Activated naive CD4-positive, alpha-beta T cell treated with anti-CD3 and anti-CD28 coated beads for 36 hours (primary cell): ENCODE measurements at regions of chr15 and their contacts with region 1.

Region 1: GRCh38 chr15:89358755-89359439 is 24.3 kb upstream of the POLG start:
- DNase-seq: peak; percentile 87
- H3K4me3 Mint-ChIP-seq: peak overlapping the region; percentile 77
- H3K27ac Mint-ChIP-seq: no peak overlapping the region
- H3K4me1 Mint-ChIP-seq: peaks cover 14% of the 10 kb centered on the region
- H3K27me3 Mint-ChIP-seq: peaks cover 81% of the 10 kb centered on the region

Region 2: DNA sequence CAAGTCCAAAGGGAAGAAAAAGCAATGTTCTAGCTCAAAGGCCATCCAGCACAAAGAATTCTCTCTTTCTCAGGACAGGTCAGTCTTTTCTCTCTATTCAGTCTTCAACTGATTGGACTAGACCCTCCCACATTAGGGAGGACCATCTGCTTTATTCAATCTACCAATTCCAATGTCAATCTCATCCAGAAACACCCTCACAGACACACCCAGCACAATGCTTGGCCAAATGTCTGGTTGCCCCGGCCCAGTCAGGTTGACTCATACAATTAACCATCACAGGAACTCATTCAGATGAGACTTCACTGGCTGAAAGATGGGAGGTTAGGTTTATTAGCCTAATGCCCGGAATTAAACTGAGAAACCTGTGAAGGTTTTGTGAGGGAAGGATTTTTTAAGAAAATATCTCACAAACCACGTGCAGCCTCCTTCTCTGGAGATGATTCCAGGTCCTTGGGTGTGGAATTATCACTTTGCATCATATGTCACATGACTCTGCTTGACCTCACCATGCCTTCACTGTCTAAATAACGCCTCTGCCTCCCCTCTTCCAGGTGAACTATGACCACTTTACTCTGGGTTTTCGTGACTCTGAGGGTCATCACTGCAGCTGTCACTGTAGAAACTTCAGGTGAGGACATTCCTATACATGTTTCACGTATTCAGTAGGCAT is 523.1 kb before region 1 on chr15:
- CTCF ChIA-PET with region 1: no interaction called
- intact Hi-C with region 1: no loop called
- DNase-seq: no peak
- H3K4me3 Mint-ChIP-seq: no peak overlapping the region
- H3K27ac Mint-ChIP-seq: no peak overlapping the region
- H3K4me1 Mint-ChIP-seq: peaks cover 5% of the 10 kb centered on the region
- H3K27me3 Mint-ChIP-seq: no peaks in the 10 kb centered on the region

Region 3: GRCh38 chr15:89243691-89244471 is 115.0 kb before region 1 on chr15 and contains the start of gene FANCI:
- CTCF ChIA-PET with region 1: no interaction called
- intact Hi-C with region 1: no loop called
- DNase-seq: peak; percentile 99
- H3K4me3 Mint-ChIP-seq: peak within 1 kb of the TSS; percentile 98
- H3K27ac Mint-ChIP-seq: peak within 1 kb of the TSS; percentile 93
- H3K4me1 Mint-ChIP-seq: peaks cover 31% of the 10 kb centered on the region
- H3K27me3 Mint-ChIP-seq: no peaks in the 10 kb centered on the region
- total RNA-seq, gene FANCI: 268 to 283 TPM

Region 4: DNA sequence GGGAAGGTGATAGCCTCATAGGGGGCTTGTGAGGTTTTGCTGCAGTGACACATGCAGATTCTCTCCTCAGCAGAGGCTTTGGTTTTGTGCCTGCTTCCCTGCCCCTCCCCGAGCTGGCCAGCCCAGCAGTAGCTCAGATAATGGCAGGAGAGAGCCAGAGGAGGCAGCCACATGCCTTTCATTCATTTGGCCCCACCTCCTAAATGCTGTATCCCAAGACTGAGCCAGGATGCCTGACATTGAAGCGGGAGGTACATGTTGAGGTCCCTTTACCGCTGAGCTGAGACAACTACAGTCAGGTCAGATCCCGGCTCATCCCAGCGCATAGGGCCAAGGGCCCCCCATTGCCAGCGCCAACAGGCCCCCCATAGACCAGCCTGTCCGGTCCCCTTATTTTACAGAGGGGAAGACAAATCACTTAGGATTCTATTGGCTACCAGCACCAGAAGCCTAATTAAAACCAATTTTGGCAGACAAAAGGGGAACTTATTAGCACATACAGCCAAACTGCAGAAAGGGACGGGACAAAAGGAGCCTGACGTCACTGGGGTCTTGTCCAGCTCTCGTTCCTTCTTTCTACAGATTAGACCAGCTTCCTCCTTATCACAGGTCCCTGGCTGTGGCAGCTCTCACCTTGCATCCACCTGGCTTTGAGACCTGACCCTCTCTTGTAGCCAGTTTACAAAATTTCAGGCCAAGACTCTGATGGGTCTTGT is 12.2 kb before region 1 on chr15:
- CTCF ChIA-PET with region 1: interaction called, 50 read pairs
- intact Hi-C with region 1: no loop called
- DNase-seq: no peak
- H3K4me3 Mint-ChIP-seq: no peak overlapping the region
- H3K27ac Mint-ChIP-seq: no peak overlapping the region
- H3K4me1 Mint-ChIP-seq: peaks cover 6% of the 10 kb centered on the region
- H3K27me3 Mint-ChIP-seq: peaks cover 4% of the 10 kb centered on the region

Region 5: GRCh38 chr15:89391685-89392257 is 32.9 kb after region 1 on chr15:
- CTCF ChIA-PET with region 1: interaction called, 19 read pairs
- intact Hi-C with region 1: no loop called
- DNase-seq: no peak
- H3K4me3 Mint-ChIP-seq: no peak overlapping the region
- H3K27ac Mint-ChIP-seq: no peak overlapping the region
- H3K4me1 Mint-ChIP-seq: no peaks in the 10 kb centered on the region
- H3K27me3 Mint-ChIP-seq: peaks cover 10% of the 10 kb centered on the region

Region 6: DNA sequence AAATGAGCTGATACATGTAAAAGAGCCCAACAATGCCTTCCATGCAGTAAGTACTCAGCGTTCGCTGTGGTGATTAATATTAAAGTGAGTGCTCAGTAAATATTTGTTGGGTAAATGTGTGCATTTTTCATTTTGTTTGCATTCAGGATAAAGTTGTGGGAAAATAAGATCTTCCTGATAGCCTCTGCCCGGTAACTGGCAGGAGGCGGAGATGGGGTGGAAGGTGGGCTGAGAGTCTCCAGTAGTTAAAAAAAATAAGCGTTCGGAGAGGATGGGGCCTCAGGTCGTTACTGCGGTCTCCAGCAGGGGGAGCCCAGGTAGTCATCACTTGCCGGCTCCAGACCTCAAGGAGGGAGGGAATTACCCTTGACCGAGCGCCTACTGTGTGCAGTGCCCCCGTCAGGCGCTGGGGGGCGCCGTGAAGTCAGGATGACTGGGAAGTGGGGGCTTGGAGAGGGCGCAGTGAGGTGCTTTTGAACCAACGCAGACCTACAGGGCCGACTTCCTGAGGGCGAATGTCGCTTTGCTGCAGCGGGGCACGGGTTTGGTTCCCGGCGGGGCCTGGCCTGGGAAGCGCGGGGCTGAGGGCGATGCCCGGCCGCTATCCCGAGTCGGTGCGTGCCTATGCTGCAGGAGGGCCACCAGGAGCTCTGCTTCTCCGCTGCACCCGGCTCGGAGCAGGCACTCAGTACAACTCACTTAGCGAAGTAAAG is 57.4 kb after region 1 on chr15:
- CTCF ChIA-PET with region 1: interaction called, 51 read pairs
- intact Hi-C with region 1: loop called (anchors 1 kb)
- DNase-seq: peak; percentile 92
- H3K4me3 Mint-ChIP-seq: no peak overlapping the region
- H3K27ac Mint-ChIP-seq: no peak overlapping the region
- H3K4me1 Mint-ChIP-seq: peaks cover 13% of the 10 kb centered on the region
- H3K27me3 Mint-ChIP-seq: peaks cover 71% of the 10 kb centered on the region

Region 7: GRCh38 chr15:89430530-89431341 is 71.8 kb after region 1 on chr15:
- CTCF ChIA-PET with region 1: interaction called, 78 read pairs
- intact Hi-C with region 1: loop called (anchors 1 kb)
- DNase-seq: peak; percentile 92
- H3K4me3 Mint-ChIP-seq: peak overlapping the region; percentile 70
- H3K27ac Mint-ChIP-seq: no peak overlapping the region
- H3K4me1 Mint-ChIP-seq: peaks cover 4% of the 10 kb centered on the region
- H3K27me3 Mint-ChIP-seq: peaks cover 12% of the 10 kb centered on the region